Activated T-helper 1 cell treated with anti-CD3 and anti-CD28 coated beads, Interleukin-12 subunit alpha, Interleukin-12 subunit beta, Interleukin-2, Interleukin-4 antibody, amounts not matched to agents 30 ng/mL and 10 ng/mL and 1 ng/mL, durations not matched to agents 14 hours and 24 hours and 36 hours (primary cell): ENCODE measurements at regions of chr14 and their contacts with region 1.

Region 1: DNA sequence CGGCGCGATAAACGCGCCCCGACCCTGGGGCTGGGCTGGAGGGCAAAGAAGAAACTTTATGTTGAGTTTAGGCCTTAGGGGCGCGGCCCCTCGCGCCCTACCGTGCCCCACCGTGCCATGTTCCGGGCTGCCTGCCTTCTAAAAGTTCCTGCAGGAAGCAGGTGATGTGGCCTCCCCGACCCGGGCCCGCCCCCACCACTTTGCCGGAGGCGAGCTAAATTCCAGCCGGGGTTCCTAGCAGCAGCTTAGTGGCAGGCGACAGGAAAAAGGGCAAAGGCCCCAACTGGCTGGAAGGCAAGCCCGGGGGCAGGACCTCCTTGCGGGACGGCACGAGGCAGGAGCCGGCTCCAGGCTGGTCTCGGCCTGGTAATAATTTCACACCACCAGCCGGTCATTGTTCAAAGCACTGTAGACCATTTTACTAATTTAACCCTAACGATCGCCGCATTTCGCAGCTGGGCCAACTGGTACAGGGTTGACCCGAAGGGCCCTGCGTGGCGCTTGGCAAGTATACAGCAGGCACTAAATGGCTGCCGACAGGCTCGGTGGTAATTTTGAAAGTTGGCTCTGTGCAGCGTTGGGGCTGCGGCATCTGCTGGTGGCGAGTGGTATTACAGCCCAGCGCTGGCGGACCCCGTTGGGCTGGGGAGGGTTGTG is 895 bp upstream of the CCDC88C start:
- DNase-seq: peak; percentile 71
- H3K4me3 Mint-ChIP-seq: peak overlapping the region; percentile 77
- H3K27ac Mint-ChIP-seq: peak overlapping the region; percentile 77
- H3K4me1 Mint-ChIP-seq: peaks cover 42% of the 10 kb centered on the region
- H3K27me3 Mint-ChIP-seq: peaks cover 3% of the 10 kb centered on the region

Region 2: DNA sequence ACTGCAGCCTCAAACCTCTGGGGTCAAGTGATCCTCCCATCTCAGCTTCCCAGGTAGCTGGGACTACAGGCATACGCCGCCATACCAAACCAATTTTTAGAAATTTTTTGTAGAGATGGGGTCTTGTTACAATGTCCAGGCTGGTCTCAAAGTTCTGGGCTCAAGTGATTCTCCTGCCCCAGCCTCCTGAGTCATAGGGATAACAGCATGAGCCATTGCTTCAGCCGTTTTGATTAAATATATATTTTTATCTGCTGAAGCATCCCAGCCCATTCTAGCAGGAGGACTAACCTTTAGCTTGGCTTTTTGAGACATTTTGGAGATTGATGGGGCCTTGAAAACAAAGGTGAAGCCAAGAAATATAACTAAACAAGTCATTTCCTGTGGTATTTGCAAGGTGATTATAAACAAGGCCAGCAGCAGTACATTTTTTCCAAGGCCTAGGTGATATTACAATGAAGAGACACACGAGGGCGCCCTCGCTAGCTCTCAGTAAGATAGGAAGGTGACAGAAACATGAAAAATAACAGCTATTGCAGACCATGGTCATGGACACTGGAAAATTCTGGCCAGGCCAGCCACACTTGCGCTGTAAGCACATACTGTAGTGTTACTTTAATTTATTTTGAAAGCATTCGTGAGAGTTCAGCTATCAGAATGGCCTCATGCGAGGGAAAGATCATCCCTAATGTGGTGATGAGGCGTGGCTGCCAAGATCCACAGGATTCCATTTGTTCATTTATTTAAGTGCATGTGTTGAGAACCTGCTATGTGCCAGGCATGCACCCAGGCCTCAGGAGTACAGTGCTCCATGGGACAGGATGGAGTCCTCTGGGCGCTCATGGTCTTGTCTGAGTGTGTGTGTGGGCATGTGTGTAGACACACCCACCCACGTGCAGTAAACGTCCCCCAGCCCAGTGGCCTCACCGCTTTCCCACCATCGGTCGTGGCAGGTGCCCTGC is 241.2 kb before region 1 on chr14:
- intact Hi-C with region 1: loop called (anchors 1 kb)
- DNase-seq: peak; percentile 64
- H3K4me3 Mint-ChIP-seq: no peak overlapping the region
- H3K27ac Mint-ChIP-seq: peak overlapping the region; percentile 86
- H3K4me1 Mint-ChIP-seq: peaks cover 35% of the 10 kb centered on the region
- H3K27me3 Mint-ChIP-seq: no peaks in the 10 kb centered on the region

Region 3: DNA sequence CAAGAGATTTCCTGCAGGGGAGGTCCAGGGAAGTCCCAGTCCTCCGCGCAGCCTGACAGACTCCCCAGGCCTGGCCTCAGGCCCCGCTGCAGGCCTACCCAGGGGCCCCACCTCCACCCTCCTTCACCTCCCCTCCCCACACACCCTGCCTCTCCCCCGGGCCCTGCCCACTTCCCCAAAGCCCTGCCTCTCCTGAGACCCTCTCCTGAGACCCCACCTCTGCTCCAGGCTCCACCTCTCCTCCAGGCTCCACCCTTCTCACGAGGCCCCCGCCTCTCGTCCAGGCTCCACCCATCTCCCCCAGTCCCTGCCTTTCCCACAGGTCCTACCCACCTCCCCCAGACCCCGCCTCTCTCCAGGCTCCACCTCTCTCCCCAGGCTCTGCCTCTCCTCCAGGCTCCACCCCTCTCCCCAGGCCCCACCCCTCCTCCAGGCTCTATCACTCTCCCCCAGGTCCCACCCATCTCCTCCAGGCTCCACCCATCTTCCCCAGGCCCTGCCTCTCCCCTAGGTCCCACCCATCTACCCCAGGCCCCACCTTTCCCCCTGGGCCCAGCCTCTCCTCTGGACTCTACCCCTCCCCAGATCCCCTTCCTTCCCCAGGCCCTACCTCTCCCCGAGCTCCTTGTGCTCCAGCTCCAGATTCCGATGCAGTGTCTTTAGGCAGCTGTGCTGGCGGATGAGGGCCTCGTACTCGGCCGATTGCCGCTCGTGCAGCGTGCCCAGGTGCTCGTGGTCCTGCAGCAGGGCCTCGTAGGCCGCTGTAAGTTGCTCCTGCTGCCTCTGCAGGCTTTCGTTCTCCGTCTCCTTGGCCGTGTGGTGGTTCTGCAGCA is 115.2 kb before region 1 on chr14:
- intact Hi-C with region 1: loop called (anchors 1 kb)
- DNase-seq: peak; percentile 36
- H3K4me3 Mint-ChIP-seq: peak overlapping the region; percentile 63
- H3K27ac Mint-ChIP-seq: peak overlapping the region; percentile 98
- H3K4me1 Mint-ChIP-seq: peaks cover 72% of the 10 kb centered on the region
- H3K27me3 Mint-ChIP-seq: no peaks in the 10 kb centered on the region

Region 4: GRCh38 chr14:91350813-91351511 is 67.6 kb before region 1 on chr14:
- intact Hi-C with region 1: loop called (anchors 1 kb)
- DNase-seq: peak; percentile 72
- H3K4me3 Mint-ChIP-seq: peak overlapping the region; percentile 74
- H3K27ac Mint-ChIP-seq: peak overlapping the region; percentile 94
- H3K4me1 Mint-ChIP-seq: peaks cover 89% of the 10 kb centered on the region
- H3K27me3 Mint-ChIP-seq: no peaks in the 10 kb centered on the region

Region 5: GRCh38 chr14:91361233-91362063 is 57.1 kb before region 1 on chr14:
- intact Hi-C with region 1: no loop called
- DNase-seq: no peak
- H3K4me3 Mint-ChIP-seq: no peak overlapping the region
- H3K27ac Mint-ChIP-seq: no peak overlapping the region
- H3K4me1 Mint-ChIP-seq: peaks cover 63% of the 10 kb centered on the region
- H3K27me3 Mint-ChIP-seq: no peaks in the 10 kb centered on the region

Region 6: GRCh38 chr14:91396959-91397815 is 21.3 kb before region 1 on chr14:
- intact Hi-C with region 1: loop called (anchors 1 kb)
- DNase-seq: peak; percentile 54
- H3K4me3 Mint-ChIP-seq: peak overlapping the region; percentile 73
- H3K27ac Mint-ChIP-seq: peak overlapping the region; percentile 93
- H3K4me1 Mint-ChIP-seq: peaks cover 78% of the 10 kb centered on the region
- H3K27me3 Mint-ChIP-seq: no peaks in the 10 kb centered on the region

Region 7: DNA sequence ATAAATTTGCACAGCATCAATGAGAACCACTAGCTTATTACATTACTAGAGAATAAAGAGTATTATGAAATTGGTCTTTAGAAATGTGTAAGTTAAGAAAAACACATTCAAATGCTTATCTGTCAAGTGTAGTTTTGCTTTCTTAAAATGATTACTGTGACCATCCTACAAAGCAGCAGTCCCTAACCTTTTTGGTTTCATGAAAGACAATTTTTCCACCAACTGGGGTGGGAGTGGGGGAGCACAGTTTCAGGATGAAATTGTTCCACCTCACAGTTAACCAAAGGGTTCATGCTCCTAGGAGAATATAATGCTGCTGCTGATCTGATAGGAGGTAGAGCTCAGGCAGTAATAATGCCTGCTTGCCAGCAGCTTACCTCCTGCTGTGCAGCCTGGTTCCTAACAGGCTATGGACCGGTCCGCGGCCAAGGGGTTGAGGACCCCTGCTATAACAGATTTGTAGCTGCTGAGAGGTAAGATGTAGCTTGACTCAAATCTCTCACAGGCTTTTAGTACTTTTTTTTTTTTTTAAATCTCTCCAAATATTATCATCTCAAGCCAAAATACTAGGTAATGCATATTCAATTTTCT is 46.2 kb after region 1 on chr14:
- intact Hi-C with region 1: loop called (anchors 2 kb)
- DNase-seq: no peak
- H3K4me3 Mint-ChIP-seq: no peak overlapping the region
- H3K27ac Mint-ChIP-seq: peak overlapping the region; percentile 81
- H3K4me1 Mint-ChIP-seq: peaks cover 20% of the 10 kb centered on the region
- H3K27me3 Mint-ChIP-seq: no peaks in the 10 kb centered on the region

Region 8: GRCh38 chr14:91555615-91556014 is 137.1 kb after region 1 on chr14:
- intact Hi-C with region 1: no loop called
- DNase-seq: no peak
- H3K4me3 Mint-ChIP-seq: no peak overlapping the region
- H3K27ac Mint-ChIP-seq: no peak overlapping the region
- H3K4me1 Mint-ChIP-seq: no peaks in the 10 kb centered on the region
- H3K27me3 Mint-ChIP-seq: peaks cover 2% of the 10 kb centered on the region

Region 9: DNA sequence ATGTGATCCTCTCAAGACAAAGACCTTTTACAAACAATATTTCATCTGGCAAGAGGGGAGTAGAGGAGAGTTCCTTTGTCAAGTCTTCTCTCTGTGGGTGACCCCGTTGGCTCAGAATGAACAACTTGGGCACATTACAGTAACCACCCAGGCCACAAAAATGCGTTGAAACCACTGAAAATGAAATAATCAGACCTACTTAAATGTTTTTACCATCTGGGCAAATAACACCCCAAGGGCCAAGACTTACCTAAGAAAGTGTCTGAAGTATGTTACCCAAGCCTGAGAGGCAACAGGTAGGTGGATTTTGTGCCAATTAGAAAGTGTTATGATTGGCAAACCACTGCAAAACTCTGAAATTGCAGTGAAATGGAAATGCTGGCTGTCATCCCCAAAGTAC is 447.5 kb after region 1 on chr14:
- intact Hi-C with region 1: loop called (anchors 2 kb)
- DNase-seq: no peak
- H3K4me3 Mint-ChIP-seq: peak overlapping the region; percentile 95
- H3K27ac Mint-ChIP-seq: peak overlapping the region; percentile 97
- H3K4me1 Mint-ChIP-seq: peaks cover 89% of the 10 kb centered on the region
- H3K27me3 Mint-ChIP-seq: no peaks in the 10 kb centered on the region